Motor neuron (in vitro differentiated cells): ENCODE measurements at regions of chr19 and their contacts with region 1.

Region 1: GRCh38 chr19:51097166-51097738 is 11.0 kb downstream of the CTU1 start:
- ATAC-seq: peak in 6 of 8 experiments; percentile 17 to 84 (median 46)
- H3K4me3 ChIP-seq: no peak overlapping the region
- H3K27ac ChIP-seq: no peak overlapping the region
- H3K4me1 ChIP-seq: no peaks in the 10 kb centered on the region

Region 2: DNA sequence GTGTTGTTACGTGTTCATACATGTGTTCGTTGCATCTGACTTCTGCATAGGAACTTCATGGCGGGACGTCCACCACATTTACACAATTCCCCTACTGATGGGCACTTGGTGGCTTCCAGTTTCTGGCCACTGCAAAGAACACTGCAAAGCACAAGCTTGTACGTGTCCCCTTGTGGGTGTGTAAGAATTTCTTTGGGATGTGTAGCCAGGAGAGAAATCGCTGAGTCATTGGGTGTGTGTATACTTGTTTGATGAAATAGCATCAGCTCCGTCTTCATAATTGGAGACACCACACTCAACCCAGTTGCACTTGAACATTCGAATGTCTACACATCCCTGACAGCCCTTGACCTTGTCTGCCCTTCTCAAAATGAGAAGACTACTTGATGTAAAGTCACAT is 163.6 kb before region 1 on chr19:
- in situ Hi-C with region 1: loop called in 1 of 9 experiments (anchors 10 kb)
- ATAC-seq: peak in 2 of 8 experiments; percentile 67 to 74
- H3K4me3 ChIP-seq: no peak overlapping the region
- H3K27ac ChIP-seq: no peak overlapping the region
- H3K4me1 ChIP-seq: no peaks in the 10 kb centered on the region

Region 3: DNA sequence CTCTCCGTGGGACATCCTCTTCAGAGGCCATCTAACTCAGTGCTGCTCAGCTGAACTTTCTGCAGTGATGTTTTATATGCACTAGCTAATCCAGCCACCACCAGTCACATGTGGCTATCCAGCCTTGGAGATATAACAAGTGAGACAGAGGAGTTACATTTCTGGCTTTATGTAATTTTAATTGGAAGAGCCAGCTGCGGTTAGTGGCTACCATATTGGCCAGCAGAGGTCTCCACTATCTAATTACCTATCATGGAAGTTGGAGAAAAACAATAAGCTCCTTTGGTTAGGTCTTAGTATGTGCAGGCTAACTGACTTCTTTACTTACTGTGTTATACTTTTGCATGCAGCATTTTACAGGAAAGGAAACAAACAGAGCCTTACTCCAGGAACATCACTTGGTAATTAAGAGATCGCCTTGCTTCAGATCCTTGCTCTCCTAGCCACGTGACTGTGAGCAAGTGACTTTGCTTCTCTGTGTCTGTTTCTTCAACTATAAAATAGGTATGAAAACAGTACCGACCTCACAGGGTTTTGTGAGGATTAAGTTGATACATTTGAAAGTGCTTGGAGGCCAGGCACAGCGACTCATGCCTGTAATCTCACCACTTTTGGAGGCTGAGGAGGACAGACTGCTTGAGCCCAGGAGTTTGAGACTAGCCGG is 76.1 kb before region 1 on chr19:
- in situ Hi-C with region 1: loop called in 1 of 9 experiments (anchors 10 kb)
- ATAC-seq: peak in 6 of 8 experiments; percentile 15 to 65 (median 30)
- H3K4me3 ChIP-seq: no peak overlapping the region
- H3K27ac ChIP-seq: no peak overlapping the region
- H3K4me1 ChIP-seq: peaks cover 0 to 3% of the 10 kb centered on the region in 2 donors

Region 4: GRCh38 chr19:51311351-51312257 is 214.4 kb after region 1 on chr19 and contains the start of gene IGLON5:
- in situ Hi-C with region 1: no loop called
- ATAC-seq: peak in 6 of 8 experiments; percentile 65 to 78 (median 70)
- H3K4me3 ChIP-seq: peak within 1 kb of the TSS; percentile 30 to 75 (median 46)
- H3K27ac ChIP-seq: no peak within 1 kb of the TSS
- H3K4me1 ChIP-seq: peaks cover 0 to 2% of the 10 kb centered on the region in 2 donors
- total RNA-seq, gene IGLON5: 0.20 to 13.0 (median 5.7) TPM

Region 5: DNA sequence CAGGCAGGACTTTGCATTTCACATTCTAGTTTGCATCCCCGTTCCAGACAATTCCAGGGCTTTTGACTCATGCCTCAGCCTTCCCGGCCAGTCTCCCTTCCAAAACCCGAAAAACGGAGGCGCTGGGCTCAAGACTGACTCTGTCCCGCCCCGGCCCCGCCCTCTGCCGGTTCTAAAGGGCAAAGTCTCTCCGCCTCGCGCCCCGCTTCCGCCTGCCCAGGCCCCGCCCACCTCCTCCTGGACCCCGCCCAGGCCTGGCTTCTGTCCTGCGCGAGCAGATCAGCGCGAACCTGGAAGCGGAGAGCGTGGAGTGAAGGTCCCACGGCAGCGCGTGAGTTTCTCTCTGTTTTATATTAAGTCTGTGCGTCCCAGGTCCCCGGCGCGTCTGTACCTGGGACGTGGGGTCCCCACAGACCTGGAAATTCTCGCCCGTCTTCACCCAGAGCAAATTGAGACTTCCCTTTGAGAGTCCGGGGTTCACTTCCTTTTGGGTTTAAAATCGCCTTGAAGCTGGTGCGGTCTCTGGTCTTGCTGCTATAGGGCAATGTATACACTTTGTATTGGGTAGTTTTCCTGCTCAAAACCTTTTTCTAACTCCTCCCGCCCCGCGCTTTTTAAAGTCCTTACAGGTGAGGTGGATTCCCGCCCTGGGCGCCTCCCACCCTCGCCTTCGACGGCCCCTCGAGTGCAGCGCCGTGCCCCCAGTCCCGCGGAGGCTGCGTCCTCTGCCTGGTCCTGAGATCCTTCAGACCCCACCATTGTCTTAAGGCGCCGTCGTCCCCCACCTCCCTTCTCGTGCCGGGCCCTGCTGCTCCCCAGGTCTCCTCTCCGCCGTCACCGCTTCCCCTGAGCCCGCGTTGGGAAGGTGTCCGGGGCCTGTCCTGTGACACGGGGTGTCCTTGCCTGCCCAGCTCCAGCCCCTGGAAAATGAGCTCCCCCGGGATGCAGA is 1504.0 kb after region 1 on chr19:
- in situ Hi-C with region 1: no loop called
- ATAC-seq: peak; percentile 95 to 99 (median 97)
- H3K4me3 ChIP-seq: peak overlapping the region; percentile 31 to 51 (median 45)
- H3K27ac ChIP-seq: no peak overlapping the region
- H3K4me1 ChIP-seq: peaks cover 3 to 4% of the 10 kb centered on the region in 2 donors